MCF 10A (cell line): ENCODE measurements at regions of chr7 and their contacts with region 1.

Region 1: GRCh38 chr7:83655951-83656556 is 7.1 kb upstream of the SEMA3E start:
- DNase-seq: peak; percentile 47
- H3K4me3 Mint-ChIP-seq: no peak overlapping the region
- H3K27ac Mint-ChIP-seq: no peak overlapping the region
- H3K4me1 Mint-ChIP-seq: no peaks in the 10 kb centered on the region
- H3K27me3 Mint-ChIP-seq: peaks cover 64% of the 10 kb centered on the region
- CTCF ChIP-seq: peak; percentile 84

Region 2: DNA sequence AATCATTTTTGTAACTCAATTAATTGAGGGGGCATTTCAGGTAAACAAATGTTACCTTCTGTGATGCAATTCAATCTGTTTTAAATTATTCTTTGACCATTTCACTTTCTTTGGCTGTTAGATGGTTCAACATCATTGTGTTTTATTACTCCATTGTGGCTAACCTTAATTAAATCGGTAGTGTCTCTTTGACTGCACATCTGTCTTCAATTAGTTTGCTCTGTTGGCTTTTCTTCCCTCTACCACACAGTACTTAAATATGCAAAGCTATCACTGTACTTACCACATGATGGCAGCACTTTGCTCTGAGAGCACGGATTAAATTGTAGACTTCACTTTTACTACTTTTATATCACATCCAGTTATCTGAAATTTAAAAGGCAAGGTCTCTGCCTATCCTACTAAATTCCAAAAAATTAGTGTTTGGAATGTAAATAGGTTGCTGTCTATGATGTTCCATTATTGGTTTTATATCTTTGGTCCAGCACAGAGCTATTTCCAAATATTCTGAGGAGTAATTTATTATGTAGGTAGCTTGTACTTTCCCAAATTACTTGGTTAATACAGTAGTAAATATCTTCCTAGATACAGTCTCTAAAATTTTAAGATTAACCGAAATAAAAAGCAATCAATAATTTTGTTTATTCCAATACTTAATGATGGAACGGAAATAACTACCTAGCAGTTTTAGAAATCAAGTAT is 845.3 kb before region 1 on chr7:
- CTCF ChIA-PET with region 1: no interaction called
- POLR2A ChIA-PET with region 1: no interaction called
- intact Hi-C with region 1: loop called (anchors 1 kb)
- DNase-seq: peak; percentile 45
- H3K4me3 Mint-ChIP-seq: no peak overlapping the region
- H3K27ac Mint-ChIP-seq: no peak overlapping the region
- H3K4me1 Mint-ChIP-seq: no peaks in the 10 kb centered on the region
- H3K27me3 Mint-ChIP-seq: peaks cover 29% of the 10 kb centered on the region
- CTCF ChIP-seq: peak; percentile 57

Region 3: GRCh38 chr7:83410989-83411591 is 245.0 kb before region 1 on chr7:
- CTCF ChIA-PET with region 1: interaction called, 9 read pairs
- POLR2A ChIA-PET with region 1: no interaction called
- intact Hi-C with region 1: loop called (anchors 1 kb)
- DNase-seq: peak; percentile 48
- H3K4me3 Mint-ChIP-seq: no peak overlapping the region
- H3K27ac Mint-ChIP-seq: no peak overlapping the region
- H3K4me1 Mint-ChIP-seq: peaks cover 4% of the 10 kb centered on the region
- H3K27me3 Mint-ChIP-seq: peaks cover 53% of the 10 kb centered on the region
- CTCF ChIP-seq: peak; percentile 78

Region 4: DNA sequence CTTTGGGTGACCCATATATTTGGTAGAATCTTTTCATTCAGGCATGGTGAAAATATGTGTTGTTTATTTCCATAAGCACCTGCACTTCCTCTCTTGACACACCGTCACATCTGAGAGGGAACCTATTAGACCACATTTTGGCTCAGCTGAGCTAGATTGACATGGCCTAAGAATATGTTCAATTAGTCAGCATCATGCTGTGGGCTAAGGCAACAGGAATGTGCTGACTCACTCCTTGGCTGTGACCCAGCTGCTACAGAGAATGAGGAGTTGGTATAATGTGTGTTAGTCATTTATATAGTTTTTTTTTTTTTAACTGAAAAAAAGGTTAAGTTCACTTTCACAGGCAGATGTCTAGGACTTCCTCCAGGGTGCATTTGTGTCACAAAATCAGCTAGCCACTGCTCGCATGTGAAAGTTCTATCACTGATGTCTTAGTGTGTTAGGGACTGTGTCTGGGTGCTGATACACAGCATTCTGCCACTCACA is 187.8 kb before region 1 on chr7:
- CTCF ChIA-PET with region 1: no interaction called
- POLR2A ChIA-PET with region 1: no interaction called
- intact Hi-C with region 1: loop called (anchors 1 kb)
- DNase-seq: peak; percentile 98
- H3K4me3 Mint-ChIP-seq: no peak overlapping the region
- H3K27ac Mint-ChIP-seq: no peak overlapping the region
- H3K4me1 Mint-ChIP-seq: no peaks in the 10 kb centered on the region
- H3K27me3 Mint-ChIP-seq: no peaks in the 10 kb centered on the region
- CTCF ChIP-seq: peak; percentile 16

Region 5: DNA sequence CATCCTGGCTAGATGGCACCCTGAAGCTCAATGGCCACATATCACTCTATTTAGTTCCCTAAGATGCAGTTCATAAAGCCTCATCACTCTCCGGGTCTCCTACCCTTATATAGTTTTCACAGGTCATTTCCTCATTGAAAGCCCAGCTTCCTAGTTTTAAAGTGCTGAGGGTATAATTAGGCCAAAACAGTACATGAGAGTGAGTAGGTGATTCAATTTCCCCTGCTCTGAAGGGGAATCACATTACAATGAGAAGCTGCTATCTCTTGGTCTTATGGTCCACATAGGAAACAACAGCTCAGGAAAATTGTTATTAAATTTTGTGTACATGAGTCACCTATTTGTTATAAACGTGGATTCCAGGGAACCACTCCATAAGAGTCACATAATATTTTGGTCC is 169.1 kb before region 1 on chr7:
- CTCF ChIA-PET with region 1: interaction called, 14 read pairs
- POLR2A ChIA-PET with region 1: no interaction called
- intact Hi-C with region 1: no loop called
- DNase-seq: no peak
- H3K4me3 Mint-ChIP-seq: no peak overlapping the region
- H3K27ac Mint-ChIP-seq: no peak overlapping the region
- H3K4me1 Mint-ChIP-seq: peaks cover 29% of the 10 kb centered on the region
- H3K27me3 Mint-ChIP-seq: no peaks in the 10 kb centered on the region
- CTCF ChIP-seq: no peak

Region 6: DNA sequence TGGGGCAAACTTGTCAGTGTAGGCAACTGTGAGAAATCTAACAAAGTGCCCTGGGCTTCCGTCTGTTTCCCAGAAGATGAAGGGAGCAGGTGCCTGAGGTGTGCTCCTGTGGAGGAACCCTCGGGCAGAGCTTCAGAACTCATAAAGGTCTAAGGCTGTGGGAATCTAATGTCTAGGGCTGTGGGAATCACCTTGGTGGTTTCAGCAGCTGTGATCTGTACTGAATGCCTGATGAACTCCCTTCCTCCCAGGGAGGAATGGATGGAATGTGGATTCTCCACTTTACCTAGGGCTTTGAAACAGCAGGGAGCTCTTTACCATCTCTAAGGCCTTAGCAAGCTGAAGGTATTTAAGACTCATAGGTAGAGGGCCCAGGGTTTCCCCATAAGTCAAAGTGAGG is 28.8 kb after region 1 on chr7:
- CTCF ChIA-PET with region 1: no interaction called
- POLR2A ChIA-PET with region 1: no interaction called
- intact Hi-C with region 1: no loop called
- DNase-seq: no peak
- H3K4me3 Mint-ChIP-seq: no peak overlapping the region
- H3K27ac Mint-ChIP-seq: no peak overlapping the region
- H3K4me1 Mint-ChIP-seq: no peaks in the 10 kb centered on the region
- H3K27me3 Mint-ChIP-seq: peaks cover 70% of the 10 kb centered on the region
- CTCF ChIP-seq: no peak

Region 7: DNA sequence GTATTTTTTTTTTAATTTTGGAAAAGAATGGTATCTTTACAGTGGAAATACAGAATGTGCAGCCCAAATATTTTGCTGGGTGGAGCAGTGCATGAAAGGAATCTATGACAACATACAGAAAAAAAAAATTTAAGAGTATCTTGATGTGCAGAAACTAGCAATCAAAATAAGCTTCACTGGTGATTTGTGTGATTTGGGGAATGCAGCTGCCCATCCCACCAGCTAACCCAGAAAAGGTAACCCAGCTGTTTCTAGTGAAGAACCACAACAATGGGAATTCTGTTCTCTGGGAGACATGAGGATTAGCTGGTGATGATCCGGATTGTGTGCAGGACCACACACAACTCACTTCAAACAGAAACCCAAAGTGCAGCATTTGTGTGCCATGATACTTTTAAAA is 1155.3 kb after region 1 on chr7:
- CTCF ChIA-PET with region 1: no interaction called
- POLR2A ChIA-PET with region 1: no interaction called
- intact Hi-C with region 1: no loop called
- DNase-seq: no peak
- H3K4me3 Mint-ChIP-seq: no peak overlapping the region
- H3K27ac Mint-ChIP-seq: no peak overlapping the region
- H3K4me1 Mint-ChIP-seq: no peaks in the 10 kb centered on the region
- H3K27me3 Mint-ChIP-seq: no peaks in the 10 kb centered on the region
- CTCF ChIP-seq: no peak